ENCODE measurements at regions of chr7 and their contacts with region 1.

Region 1: DNA sequence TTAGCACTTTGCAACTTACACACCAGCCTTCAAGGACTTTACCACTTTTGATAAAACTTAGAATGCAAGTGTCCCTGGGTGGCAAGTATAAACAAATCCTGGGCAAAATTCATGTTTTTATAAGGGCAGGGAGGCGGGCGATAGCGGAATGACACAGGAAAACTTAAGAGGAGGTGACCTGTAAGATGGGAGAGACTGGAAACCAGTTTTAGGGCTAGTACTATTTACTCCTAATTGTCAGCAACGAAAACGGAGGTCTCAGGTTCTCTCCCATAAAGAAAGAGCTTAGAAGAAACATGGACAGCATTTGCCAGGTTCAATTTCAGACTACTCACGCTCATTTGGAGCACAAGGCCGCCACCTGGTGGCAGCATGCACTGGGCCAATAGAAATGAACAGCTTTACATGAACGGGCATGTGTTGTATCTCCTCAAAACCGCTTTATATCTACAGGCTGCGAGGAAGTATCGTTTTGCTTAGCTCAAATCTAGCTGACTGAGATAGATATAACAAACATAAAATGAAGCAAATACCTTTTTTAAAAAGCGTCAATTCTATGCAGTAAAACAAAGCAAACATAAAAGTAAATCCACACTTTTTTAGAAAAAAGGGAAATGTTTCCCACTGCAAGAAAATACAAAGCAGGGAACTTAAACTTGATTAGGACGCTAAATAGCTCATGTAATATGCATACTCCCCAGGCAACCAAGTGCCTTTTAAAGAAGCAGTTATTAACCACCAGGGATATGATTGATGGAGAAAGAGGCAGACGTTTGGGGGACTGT is 37.6 kb upstream of the SVOPL start:
- DNase-seq: peak; percentile 80
- ATAC-seq: peak; percentile 76

Region 2: DNA sequence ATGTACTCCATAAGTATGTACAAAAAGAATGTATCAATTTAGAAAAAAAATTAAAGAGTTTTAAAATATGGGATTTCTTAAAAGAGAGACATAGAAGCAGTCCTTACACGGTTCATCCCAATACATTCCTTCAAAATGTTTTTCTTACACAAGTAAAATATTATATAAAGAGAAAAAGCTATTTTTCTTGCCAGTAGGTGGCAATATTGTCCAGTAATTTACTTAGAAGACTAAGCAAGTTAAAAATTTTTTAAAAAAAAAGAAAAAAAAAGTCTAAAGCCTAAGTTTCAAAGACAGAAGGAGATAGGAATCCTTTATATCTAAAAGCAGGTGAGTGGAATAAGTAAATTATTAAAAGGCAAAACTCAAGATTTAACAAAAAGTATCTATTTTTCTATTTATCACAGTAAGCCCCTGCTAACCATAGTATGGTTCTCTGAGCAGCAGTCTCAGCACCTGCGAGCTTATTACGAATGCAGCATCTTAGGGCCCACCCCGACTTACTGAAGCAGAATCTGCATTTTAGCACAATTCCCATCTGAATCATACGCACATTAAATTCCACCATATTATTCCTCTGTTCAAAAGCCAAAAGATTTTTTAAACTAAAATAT is 1132.6 kb before region 1 on chr7:
- intact Hi-C with region 1: loop called (anchors 5 kb)
- DNase-seq: no peak
- ATAC-seq: no peak

Region 3: DNA sequence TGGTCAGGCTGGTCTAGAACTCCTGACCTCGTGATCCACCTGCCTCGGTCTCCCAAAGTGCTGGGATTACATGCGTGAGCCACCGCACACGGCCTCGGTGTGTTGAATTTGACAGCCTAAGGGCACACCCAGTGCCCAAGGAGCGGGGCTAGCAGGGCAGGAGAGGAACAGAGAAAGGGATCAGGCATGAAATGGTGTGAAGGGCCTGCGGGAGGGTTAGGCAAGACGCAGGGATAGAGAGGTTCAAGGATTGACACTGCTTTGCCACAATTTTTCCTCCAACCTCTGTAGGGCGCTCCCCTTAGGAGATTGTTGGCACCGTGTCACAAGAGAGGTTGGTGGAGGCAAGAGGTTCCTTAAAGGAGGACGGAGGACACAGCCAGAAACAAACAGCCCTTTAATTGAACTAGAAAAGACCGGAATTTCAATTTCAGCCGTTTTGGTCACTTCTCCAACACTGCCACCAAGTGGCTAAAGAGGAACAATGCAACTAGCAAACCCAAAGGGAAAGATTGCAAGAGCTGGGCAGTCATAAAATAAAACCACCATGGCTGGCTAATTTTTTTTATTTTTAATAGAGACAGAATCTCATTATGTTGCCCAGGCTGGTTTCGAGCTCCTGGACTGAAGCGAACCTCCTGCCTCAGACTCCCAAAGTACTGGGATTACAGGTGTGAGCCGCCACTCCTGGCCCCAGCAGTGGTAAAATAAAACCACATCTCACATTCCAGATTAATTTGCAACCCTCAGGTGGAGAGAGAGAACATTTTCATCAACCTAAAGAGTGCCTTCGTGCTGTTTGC is 730.0 kb before region 1 on chr7:
- intact Hi-C with region 1: loop called (anchors 5 kb)
- DNase-seq: no peak
- ATAC-seq: peak; percentile 56

Region 4: DNA sequence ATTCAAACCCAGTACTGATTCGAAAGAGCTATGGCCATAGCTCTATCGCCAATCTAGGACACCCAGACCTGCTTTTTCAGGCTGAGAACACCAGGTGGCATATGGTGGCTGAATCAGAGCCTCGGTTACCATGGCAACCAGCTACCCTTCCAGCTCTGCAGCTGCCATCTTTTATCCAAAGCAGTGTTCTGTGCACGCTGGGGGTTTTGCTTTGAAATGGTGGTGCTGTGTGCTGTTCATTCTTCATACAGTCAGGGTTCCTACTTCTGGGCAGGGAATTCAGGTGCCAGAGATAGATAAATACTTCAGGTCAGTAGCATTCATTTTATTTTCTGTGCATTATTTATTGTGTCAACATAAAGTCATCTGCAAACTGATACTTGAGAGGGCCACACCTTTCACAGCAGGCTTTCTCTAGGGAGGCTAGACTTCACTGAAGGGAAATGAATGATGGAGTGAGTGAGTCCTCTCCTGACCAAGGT is 577.1 kb before region 1 on chr7:
- intact Hi-C with region 1: loop called (anchors 1 kb)
- DNase-seq: no peak
- ATAC-seq: no peak

Region 5: DNA sequence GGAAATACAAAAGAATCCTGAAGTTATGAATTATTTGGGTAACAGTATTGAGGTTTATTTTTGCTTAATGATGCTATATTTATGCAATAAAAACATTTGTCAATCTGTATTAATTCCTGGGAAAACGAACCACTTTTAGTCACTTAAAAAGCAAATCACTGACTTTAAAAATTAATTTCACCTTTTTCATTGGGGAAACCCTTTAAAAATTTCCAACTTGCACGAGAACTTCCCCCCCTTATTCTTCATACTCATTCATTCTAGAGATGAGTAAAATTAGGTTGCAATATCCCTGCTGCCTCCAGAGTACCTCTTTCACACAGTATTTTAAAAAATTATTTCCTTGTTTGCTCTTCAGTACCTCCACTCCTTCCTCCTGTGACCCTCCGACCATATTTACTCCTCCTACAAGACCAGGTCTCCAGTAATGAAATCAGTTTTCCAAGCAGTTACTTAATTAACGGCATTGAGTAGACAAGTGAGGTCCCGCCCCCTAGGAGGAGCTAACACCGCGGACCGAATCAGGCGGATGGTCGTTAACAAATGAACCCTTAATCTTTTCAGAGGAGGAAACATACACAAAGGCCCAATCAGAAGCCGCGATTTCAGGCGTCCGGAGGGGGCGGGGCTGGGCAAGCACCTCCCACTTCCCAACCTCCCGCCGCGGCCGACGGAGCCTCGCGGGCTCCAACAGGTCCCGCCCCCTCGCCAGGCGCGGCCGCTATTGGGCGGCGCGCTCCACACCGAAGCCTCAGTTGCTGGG is 279.1 kb before region 1 on chr7:
- intact Hi-C with region 1: loop called (anchors 10 kb)
- DNase-seq: peak; percentile 99
- ATAC-seq: peak; percentile 98

Region 6: GRCh38 chr7:138898255-138898654 is 159.5 kb after region 1 on chr7:
- intact Hi-C with region 1: no loop called
- DNase-seq: no peak
- ATAC-seq: no peak

Region 7: DNA sequence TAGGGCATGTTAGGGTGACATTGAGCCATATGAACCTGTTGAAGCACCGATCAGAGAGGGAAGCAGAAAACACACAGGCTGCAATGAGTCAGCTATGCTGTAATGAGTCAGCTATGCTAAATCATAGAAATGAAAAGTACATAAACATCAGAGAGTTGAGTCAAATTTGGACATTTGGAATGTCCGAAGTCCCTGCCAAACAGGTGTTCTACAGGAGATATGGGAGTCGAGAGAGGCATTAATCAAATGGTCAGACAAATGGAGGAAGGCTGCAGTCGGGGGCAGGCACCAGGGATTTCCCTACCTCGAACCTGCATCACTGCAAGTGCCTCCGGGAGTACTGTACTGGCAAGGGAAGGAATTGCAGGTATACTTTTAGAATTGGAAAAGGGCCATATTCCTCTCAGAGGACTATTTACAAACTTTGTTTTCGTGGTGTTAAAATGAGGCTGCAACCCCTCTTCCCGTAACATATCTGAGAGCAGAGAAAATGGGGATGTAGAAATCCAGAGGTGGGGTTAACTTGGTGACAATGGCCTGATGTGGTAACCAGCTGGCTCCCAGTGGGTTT is 379.6 kb after region 1 on chr7:
- intact Hi-C with region 1: no loop called
- DNase-seq: no peak
- ATAC-seq: no peak

Measured in Right ventricle myocardium inferior (tissue), 1 donor.